Prostate gland (tissue), 2 donors: ENCODE measurements at regions of chr18 and their contacts with region 1.

Region 1: DNA sequence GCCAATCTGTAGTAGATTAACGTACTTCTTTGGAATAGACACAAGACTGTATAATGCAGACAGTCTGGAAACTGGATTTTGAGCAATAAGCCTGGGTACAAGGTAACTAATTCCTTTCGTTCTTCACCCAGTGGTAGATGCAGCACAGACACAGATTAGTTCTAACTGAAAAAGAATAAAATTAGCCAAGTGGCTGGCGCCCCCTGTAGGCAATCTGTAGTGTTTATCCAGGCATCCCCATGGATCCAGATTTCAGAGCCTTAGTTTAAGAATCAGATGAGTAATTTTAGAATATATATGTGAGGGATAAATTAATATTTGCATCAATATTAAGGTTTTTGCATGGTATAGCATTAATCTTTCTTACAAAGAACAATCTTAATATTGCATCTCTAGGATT is 563.9 kb downstream of the DCC start:
- DNase-seq: no peak
- H3K4me3 ChIP-seq: no peak overlapping the region
- H3K27ac ChIP-seq: no peak overlapping the region
- H3K4me1 ChIP-seq: no peaks in the 10 kb centered on the region
- H3K27me3 ChIP-seq: no peaks in the 10 kb centered on the region
- CTCF ChIP-seq: peak in 1 of 4 experiments; percentile 19
- POLR2A ChIP-seq: no peak

Region 2: DNA sequence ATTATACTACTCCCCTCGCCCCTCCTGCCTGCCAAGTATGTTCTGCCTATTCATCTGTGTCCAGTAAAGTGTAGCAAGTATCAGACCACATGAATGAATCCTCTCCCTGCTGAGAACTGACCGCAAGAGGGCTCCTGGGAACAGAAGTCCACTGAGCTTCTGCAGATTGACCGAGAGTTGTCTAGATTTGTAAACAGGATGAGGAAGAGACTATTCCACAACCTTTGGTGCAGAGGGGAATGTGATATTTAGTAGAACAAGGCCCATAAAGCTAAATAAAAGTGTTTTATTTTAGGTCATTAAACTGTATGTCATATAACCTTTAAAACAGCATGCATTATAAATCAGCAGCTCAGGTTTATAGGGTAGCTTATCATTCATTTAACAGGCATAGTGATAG is 186.9 kb before region 1 on chr18:
- intact Hi-C with region 1: loop called (anchors 10 kb)
- DNase-seq: no peak
- H3K4me3 ChIP-seq: no peak overlapping the region
- H3K27ac ChIP-seq: no peak overlapping the region
- H3K4me1 ChIP-seq: no peaks in the 10 kb centered on the region
- H3K27me3 ChIP-seq: no peaks in the 10 kb centered on the region
- CTCF ChIP-seq: no peak
- POLR2A ChIP-seq: no peak